Naive thymus-derived CD4-positive, alpha-beta T cell (primary cell): ENCODE measurements at regions of chr13 and their contacts with region 1.

Region 1: DNA sequence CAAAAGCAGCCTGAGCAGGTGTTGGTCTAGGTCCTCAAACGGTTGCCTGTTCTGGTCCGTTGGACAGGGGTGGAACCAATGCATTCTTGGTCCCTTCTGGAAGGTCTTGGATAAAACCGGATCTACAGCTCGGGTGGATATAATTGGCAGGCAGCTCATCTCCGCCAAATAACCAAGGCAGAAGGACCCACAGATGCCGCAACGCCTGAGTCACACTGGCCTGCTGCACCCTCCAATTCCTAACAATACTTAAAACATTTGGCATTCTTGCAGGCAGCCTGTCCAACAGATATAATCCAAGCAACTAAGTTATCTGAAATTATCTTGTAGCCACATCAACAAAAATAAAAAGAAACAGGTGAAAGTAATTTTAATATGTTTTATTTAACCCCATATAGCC is 59.0 kb upstream of the FGF14 start:
- DNase-seq: no peak
- ATAC-seq: no peak
- H3K4me3 ChIP-seq: no peak overlapping the region
- H3K4me3 Mint-ChIP-seq: no peak overlapping the region
- H3K27ac ChIP-seq: no peak overlapping the region
- H3K27ac Mint-ChIP-seq: no peak overlapping the region
- H3K4me1 ChIP-seq: no peaks in the 10 kb centered on the region
- H3K4me1 Mint-ChIP-seq: peaks cover 0 to 7% (median 5%) of the 10 kb centered on the region in 7 donors
- H3K27me3 ChIP-seq: no peaks in the 10 kb centered on the region
- H3K27me3 Mint-ChIP-seq: peaks cover 2 to 30% (median 17%) of the 10 kb centered on the region in 5 donors

Region 2: DNA sequence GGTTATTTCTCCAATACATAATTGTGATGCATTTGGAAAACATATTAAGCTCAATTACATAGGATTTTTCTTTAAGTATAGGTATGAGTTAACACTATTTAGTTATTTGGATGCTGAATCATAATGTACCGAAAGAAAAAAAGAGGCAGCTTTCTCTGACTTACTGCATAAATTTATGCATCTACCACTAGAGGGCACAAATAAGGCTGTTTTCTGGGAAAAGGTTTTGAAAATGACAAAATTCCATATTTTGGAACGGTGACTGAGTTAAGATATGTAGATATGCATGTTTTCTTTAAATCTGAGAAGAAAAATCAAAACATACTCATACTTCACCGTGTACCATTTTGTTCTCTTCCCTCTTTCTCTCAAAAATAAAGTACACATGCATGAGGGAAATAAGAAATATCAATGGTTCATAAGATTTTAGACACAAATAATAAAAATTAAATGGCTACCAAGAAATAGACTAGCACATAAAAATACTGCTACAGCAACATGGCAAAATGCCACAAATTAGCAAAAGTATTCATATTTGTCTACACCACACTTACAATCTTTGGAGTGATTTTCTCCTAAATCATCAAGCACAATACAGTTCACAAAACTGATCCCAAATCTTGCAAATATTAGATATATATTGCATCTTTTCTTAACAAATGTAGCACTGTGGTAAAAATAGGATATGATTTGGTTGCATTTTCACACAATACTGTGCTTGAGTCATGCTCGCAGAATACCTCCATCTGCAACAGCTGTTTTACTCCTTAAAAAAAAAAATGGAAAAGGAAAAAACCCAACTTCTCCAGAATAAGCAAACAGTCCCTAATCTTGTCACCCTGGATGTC is 319.0 kb before region 1 on chr13:
- CTCF ChIA-PET with region 1: no interaction called
- POLR2A ChIA-PET with region 1: no interaction called
- intact Hi-C with region 1: loop called in 1 of 2 experiments (anchors 1 kb)
- DNase-seq: no peak
- ATAC-seq: no peak
- H3K4me3 ChIP-seq: no peak overlapping the region
- H3K4me3 Mint-ChIP-seq: no peak overlapping the region
- H3K27ac ChIP-seq: no peak overlapping the region
- H3K27ac Mint-ChIP-seq: no peak overlapping the region
- H3K4me1 ChIP-seq: no peaks in the 10 kb centered on the region
- H3K4me1 Mint-ChIP-seq: peaks cover 0 to 1% (median 0%) of the 10 kb centered on the region in 7 donors
- H3K27me3 ChIP-seq: no peaks in the 10 kb centered on the region
- H3K27me3 Mint-ChIP-seq: peaks cover 0 to 12% (median 0%) of the 10 kb centered on the region in 5 donors

Region 3: DNA sequence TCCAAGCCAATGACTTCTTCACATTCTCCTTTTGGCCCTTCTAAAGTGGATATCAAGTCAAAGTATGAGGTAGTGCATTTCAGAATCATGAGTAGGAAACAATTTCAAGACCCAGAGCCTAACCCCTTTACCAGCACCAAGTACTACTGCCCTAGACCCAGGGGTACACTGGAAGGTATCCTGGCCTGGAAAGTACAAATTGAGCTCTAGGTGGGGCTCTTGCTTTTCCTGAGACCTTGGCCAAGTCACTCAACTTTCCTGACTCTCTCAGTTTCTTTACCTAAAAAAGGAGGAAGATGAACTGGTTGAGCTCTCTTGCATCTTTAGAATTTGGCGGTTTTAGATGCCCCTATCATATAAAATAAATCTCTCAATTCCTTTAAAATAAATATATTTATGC is 263.6 kb before region 1 on chr13:
- CTCF ChIA-PET with region 1: no interaction called
- POLR2A ChIA-PET with region 1: no interaction called
- intact Hi-C with region 1: loop called in 1 of 2 experiments (anchors 2 kb)
- DNase-seq: no peak
- ATAC-seq: no peak
- H3K4me3 ChIP-seq: no peak overlapping the region
- H3K4me3 Mint-ChIP-seq: no peak overlapping the region
- H3K27ac ChIP-seq: no peak overlapping the region
- H3K27ac Mint-ChIP-seq: no peak overlapping the region
- H3K4me1 ChIP-seq: no peaks in the 10 kb centered on the region
- H3K4me1 Mint-ChIP-seq: peaks cover 0 to 2% (median 0%) of the 10 kb centered on the region in 7 donors
- H3K27me3 ChIP-seq: peaks cover 0 to 3% of the 10 kb centered on the region in 2 donors
- H3K27me3 Mint-ChIP-seq: peaks cover 0 to 13% (median 4%) of the 10 kb centered on the region in 5 donors

Region 4: DNA sequence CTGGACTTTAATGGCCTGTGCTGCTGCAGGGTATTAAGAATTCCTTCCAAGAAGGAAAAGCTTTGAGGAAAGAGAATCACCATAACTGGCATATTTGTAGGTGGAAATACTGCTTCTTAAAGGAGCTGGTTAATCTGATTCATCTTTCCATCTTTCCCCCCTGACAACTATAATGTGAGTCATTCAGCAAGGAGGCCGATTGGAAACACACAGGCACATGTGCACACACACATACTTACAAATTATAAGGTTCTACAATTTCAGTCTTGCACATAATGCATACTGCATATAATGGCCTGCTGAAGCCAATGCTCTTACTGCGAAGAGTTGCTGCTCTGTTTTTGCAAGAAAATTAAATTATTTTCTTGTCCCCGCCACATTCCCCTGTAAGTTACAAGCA is 57.2 kb after region 1 on chr13:
- CTCF ChIA-PET with region 1: no interaction called
- POLR2A ChIA-PET with region 1: no interaction called
- intact Hi-C with region 1: no loop called
- DNase-seq: no peak
- ATAC-seq: no peak
- H3K4me3 ChIP-seq: no peak overlapping the region
- H3K4me3 Mint-ChIP-seq: no peak overlapping the region
- H3K27ac ChIP-seq: no peak overlapping the region
- H3K27ac Mint-ChIP-seq: no peak overlapping the region
- H3K4me1 ChIP-seq: no peaks in the 10 kb centered on the region
- H3K4me1 Mint-ChIP-seq: no peaks in the 10 kb centered on the region
- H3K27me3 ChIP-seq: no peaks in the 10 kb centered on the region
- H3K27me3 Mint-ChIP-seq: peaks cover 0 to 41% (median 22%) of the 10 kb centered on the region in 5 donors